Heart left ventricle (tissue), 16 donors: ENCODE measurements at regions of chr7 and their contacts with region 1.

Region 1: GRCh38 chr7:100469227-100470044 is 5.4 kb upstream of the SPACDR start:
- DNase-seq: peak; percentile 85 to 93 (median 88)
- ATAC-seq: peak; percentile 59 to 75 (median 70)
- H3K4me3 ChIP-seq: no peak overlapping the region
- H3K27ac ChIP-seq: peak overlapping the region in 10 of 12 donors; percentile 8 to 83 (median 64)
- H3K4me1 ChIP-seq: peaks cover 3 to 81% (median 48%) of the 10 kb centered on the region in 12 donors
- H3K27me3 ChIP-seq: no peaks in the 10 kb centered on the region
- CTCF ChIP-seq: peak; percentile 82 to 98 (median 94)
- POLR2A ChIP-seq: peak in 1 of 2 donors; percentile 18

Region 2: GRCh38 chr7:100556541-100556940 is 87.1 kb after region 1 on chr7:
- intact Hi-C with region 1: loop called (anchors 1 to 5 kb)
- DNase-seq: no peak
- ATAC-seq: no peak
- H3K4me3 ChIP-seq: no peak overlapping the region
- H3K27ac ChIP-seq: no peak overlapping the region
- H3K4me1 ChIP-seq: peaks cover 0 to 7% (median 1%) of the 10 kb centered on the region in 12 donors
- H3K27me3 ChIP-seq: no peaks in the 10 kb centered on the region
- CTCF ChIP-seq: no peak
- POLR2A ChIP-seq: no peak

Region 3: DNA sequence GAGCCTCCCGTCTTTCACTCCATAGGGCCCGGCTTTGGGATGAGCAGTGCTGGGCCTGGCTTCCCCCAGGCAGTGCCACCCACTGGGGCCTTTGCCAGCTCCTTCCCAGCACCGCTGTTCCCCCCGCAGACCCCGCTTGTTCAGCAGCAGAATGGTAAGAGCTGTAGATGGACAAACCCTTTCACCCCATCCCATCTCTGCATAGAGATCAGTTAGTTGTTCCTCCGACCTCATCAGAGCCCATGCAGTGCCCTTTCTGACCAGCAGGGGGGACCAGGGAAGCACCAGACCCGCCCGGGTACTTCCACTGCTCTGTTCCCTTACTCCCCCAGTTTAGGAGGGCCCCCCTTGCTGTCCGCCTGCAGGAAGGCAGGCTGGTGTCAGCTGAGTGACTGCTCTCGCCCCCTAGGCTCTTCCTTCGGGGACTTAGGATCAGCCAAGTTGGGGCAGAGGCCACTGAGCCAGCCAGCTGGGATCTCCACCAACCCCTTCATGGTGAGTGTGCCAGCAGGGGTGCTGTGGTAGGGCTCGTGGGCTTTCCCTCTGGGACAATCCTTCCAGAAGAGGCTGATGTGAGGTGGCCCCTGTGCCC is 94.5 kb after region 1 on chr7:
- intact Hi-C with region 1: loop called (anchors 1 to 5 kb)
- DNase-seq: peak; percentile 78 to 88 (median 81)
- ATAC-seq: peak; percentile 37 to 70 (median 63)
- H3K4me3 ChIP-seq: no peak overlapping the region
- H3K27ac ChIP-seq: no peak overlapping the region
- H3K4me1 ChIP-seq: peaks cover 0 to 13% (median 3%) of the 10 kb centered on the region in 12 donors
- H3K27me3 ChIP-seq: no peaks in the 10 kb centered on the region
- CTCF ChIP-seq: peak; percentile 89 to 96 (median 94)
- POLR2A ChIP-seq: no peak

Region 4: GRCh38 chr7:100680167-100680575 is 210.7 kb after region 1 on chr7:
- intact Hi-C with region 1: loop called in 2 of 10 experiments (anchors 5 kb)
- DNase-seq: peak in 2 of 5 donors; percentile 44 to 64
- ATAC-seq: peak; percentile 0 to 39 (median 23)
- H3K4me3 ChIP-seq: no peak overlapping the region
- H3K27ac ChIP-seq: peak overlapping the region in 7 of 12 donors; percentile 10 to 67 (median 28)
- H3K4me1 ChIP-seq: peaks cover 0 to 44% (median 14%) of the 10 kb centered on the region in 12 donors
- H3K27me3 ChIP-seq: no peaks in the 10 kb centered on the region
- CTCF ChIP-seq: no peak
- POLR2A ChIP-seq: no peak

Region 5: GRCh38 chr7:100705753-100706671 is 236.6 kb after region 1 on chr7 and contains the start of gene POP7:
- intact Hi-C with region 1: loop called in 1 of 10 experiments (anchors 5 kb)
- DNase-seq: peak; percentile 99 to 100 (median 99)
- ATAC-seq: peak; percentile 96 to 99 (median 98)
- H3K4me3 ChIP-seq: peak within 1 kb of the TSS; percentile 53 to 88 (median 77)
- H3K27ac ChIP-seq: peak within 1 kb of the TSS; percentile 91 to 99 (median 94)
- H3K4me1 ChIP-seq: peaks cover 0 to 28% (median 18%) of the 10 kb centered on the region in 12 donors
- H3K27me3 ChIP-seq: no peaks in the 10 kb centered on the region
- CTCF ChIP-seq: no peak
- POLR2A ChIP-seq: peak in 1 of 2 donors; percentile 71
- total RNA-seq, gene POP7: 24.1 to 41.3 (median 28.9) TPM

Region 6: DNA sequence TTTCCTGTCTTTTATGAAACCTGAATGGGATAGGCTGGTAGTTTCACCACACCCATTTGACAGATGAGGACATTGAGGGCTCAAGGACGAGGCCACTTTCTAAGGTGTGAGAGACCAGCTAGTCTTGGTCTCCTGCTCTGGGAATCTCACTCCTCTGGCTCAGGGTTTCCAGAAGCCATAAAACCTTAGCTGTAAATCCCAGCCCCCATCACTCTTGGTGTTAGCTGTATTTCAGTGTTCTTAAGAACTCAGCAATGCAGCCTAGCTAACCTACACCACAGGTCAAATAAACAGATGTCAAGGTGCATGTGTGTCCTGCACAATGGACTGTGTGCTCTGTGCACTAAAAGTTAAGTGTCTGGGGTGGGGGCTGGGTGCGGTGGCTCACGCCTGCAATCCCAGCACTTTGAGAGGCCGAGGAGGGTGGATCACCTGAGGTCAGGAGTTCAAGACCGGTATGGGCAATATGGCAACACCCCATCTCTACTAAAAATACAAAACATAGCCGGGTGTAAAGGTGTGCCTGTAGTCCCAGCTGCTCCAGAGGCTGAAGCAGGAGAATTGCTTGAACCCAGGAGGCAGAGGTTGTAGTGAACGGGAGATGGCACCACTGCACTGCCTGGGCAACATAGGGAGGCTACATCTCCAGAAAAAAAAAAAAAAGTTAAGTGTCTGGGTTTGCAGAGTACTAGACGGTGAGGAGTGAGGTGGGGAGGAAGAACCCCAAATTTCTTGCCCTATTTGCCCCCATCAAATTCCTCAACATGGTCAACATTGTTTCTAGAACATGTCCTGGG is 250.3 kb after region 1 on chr7:
- intact Hi-C with region 1: loop called in 1 of 10 experiments (anchors 10 kb)
- DNase-seq: peak in 1 of 5 donors; percentile 4
- ATAC-seq: no peak
- H3K4me3 ChIP-seq: no peak overlapping the region
- H3K27ac ChIP-seq: no peak overlapping the region
- H3K4me1 ChIP-seq: peaks cover 0 to 11% (median 0%) of the 10 kb centered on the region in 12 donors
- H3K27me3 ChIP-seq: peaks cover 11 to 50% (median 34%) of the 10 kb centered on the region in 9 donors
- CTCF ChIP-seq: no peak
- POLR2A ChIP-seq: no peak

Region 7: GRCh38 chr7:100726996-100727761 is 257.7 kb after region 1 on chr7:
- intact Hi-C with region 1: loop called in 3 of 10 experiments (anchors 1 to 10 kb)
- DNase-seq: peak in 1 of 5 donors; percentile 3
- ATAC-seq: no peak
- H3K4me3 ChIP-seq: no peak overlapping the region
- H3K27ac ChIP-seq: no peak overlapping the region
- H3K4me1 ChIP-seq: peaks cover 0 to 3% (median 0%) of the 10 kb centered on the region in 12 donors
- H3K27me3 ChIP-seq: peaks cover 0 to 37% (median 9%) of the 10 kb centered on the region in 9 donors
- CTCF ChIP-seq: no peak
- POLR2A ChIP-seq: no peak